ENCODE measurements at regions of chr3 and their contacts with region 1.

Region 1: GRCh38 chr3:13452490-13453335 is 27.4 kb upstream of the HDAC11 start:
- DNase-seq: peak in 1 of 2 experiments; percentile 61
- H3K4me3 ChIP-seq: peak overlapping the region; percentile 68
- H3K4me3 Mint-ChIP-seq: peak overlapping the region; percentile 78
- H3K27ac Mint-ChIP-seq: peak overlapping the region; percentile 92
- H3K4me1 ChIP-seq: no peaks in the 10 kb centered on the region
- H3K4me1 Mint-ChIP-seq: no peaks in the 10 kb centered on the region
- H3K27me3 ChIP-seq: no peaks in the 10 kb centered on the region
- H3K27me3 Mint-ChIP-seq: no peaks in the 10 kb centered on the region
- CTCF ChIP-seq: peak; percentile 60 to 63

Region 2: DNA sequence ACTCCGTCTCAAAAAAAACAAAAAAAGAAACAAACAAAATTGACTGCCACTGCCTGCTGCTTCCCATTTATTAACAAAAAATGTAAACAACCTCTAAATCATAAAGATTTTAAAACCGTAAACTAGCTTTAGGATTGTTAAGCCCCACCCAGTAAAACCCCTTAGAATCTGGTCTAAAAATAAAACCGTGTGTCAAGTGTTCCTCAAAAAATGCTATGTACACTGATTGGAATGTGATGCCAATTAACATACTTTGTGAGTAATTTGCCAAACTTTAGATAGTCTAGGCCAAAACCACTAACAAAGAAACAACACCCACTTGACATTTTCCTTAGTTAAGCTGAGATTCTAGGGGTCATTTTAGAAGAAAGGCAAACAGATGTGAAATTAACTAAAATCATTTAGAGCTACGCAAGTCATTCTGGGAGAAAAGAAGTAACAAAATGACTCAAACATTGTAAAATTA is 794.1 kb before region 1 on chr3:
- CTCF ChIA-PET with region 1: no interaction called
- POLR2A ChIA-PET with region 1: no interaction called
- intact Hi-C with region 1: no loop called
- DNase-seq: no peak
- H3K4me3 ChIP-seq: no peak overlapping the region
- H3K4me3 Mint-ChIP-seq: no peak overlapping the region
- H3K27ac Mint-ChIP-seq: peak overlapping the region; percentile 42
- H3K4me1 ChIP-seq: peaks cover 24% of the 10 kb centered on the region
- H3K4me1 Mint-ChIP-seq: peaks cover 33% of the 10 kb centered on the region
- H3K27me3 ChIP-seq: no peaks in the 10 kb centered on the region
- H3K27me3 Mint-ChIP-seq: no peaks in the 10 kb centered on the region
- CTCF ChIP-seq: no peak

Region 3: DNA sequence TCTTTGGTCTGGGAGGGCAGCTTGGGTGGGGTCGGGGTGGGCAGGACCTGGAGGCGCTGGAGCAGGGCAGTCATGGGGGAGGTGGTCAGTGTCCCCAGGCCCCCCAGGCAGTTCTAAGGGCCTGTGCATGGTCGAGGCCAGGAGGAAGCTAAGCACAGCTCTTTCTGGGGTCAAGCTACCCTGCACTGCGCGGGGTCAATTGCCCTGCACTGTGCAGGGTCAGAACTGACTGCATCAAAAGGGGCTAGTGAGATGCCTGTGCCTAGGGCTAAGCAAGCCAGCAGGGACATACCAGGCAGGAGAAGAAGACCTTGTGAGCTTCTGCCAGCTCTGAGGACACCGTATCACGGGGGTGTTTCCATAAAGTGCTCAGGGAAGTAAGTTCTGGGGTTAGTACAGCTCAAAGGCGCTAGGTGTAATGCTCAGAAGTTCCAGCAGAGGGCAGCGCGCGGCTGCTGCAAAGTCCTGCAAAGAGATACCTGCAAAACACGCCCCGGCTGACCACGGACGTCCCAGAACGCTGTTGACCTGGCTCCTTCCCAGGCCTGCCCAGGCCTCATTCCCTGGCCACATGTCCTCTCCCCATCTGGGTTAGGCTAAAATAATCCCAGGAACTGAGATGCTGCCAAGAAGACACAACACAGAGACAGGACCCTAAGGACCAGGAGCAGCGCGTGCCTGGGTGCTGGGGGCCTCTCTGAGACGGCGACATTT is 360.7 kb before region 1 on chr3:
- CTCF ChIA-PET with region 1: interaction called, 23 read pairs
- POLR2A ChIA-PET with region 1: no interaction called
- intact Hi-C with region 1: loop called (anchors 1 kb)
- DNase-seq: peak; percentile 80 to 83
- H3K4me3 ChIP-seq: no peak overlapping the region
- H3K4me3 Mint-ChIP-seq: no peak overlapping the region
- H3K27ac Mint-ChIP-seq: no peak overlapping the region
- H3K4me1 ChIP-seq: no peaks in the 10 kb centered on the region
- H3K4me1 Mint-ChIP-seq: no peaks in the 10 kb centered on the region
- H3K27me3 ChIP-seq: no peaks in the 10 kb centered on the region
- H3K27me3 Mint-ChIP-seq: no peaks in the 10 kb centered on the region
- CTCF ChIP-seq: peak; percentile 86 to 96

Region 4: GRCh38 chr3:13353936-13354542 is 98.7 kb before region 1 on chr3:
- CTCF ChIA-PET with region 1: interaction called, 14 read pairs
- POLR2A ChIA-PET with region 1: no interaction called
- intact Hi-C with region 1: loop called (anchors 5 kb)
- DNase-seq: peak in 1 of 2 experiments; percentile 24
- H3K4me3 ChIP-seq: no peak overlapping the region
- H3K4me3 Mint-ChIP-seq: no peak overlapping the region
- H3K27ac Mint-ChIP-seq: no peak overlapping the region
- H3K4me1 ChIP-seq: no peaks in the 10 kb centered on the region
- H3K4me1 Mint-ChIP-seq: no peaks in the 10 kb centered on the region
- H3K27me3 ChIP-seq: no peaks in the 10 kb centered on the region
- H3K27me3 Mint-ChIP-seq: no peaks in the 10 kb centered on the region
- CTCF ChIP-seq: peak in 1 of 2 experiments; percentile 47

Region 5: GRCh38 chr3:13406190-13406589 is 46.5 kb before region 1 on chr3:
- CTCF ChIA-PET with region 1: no interaction called
- POLR2A ChIA-PET with region 1: no interaction called
- intact Hi-C with region 1: no loop called
- DNase-seq: no peak
- H3K4me3 ChIP-seq: no peak overlapping the region
- H3K4me3 Mint-ChIP-seq: no peak overlapping the region
- H3K27ac Mint-ChIP-seq: no peak overlapping the region
- H3K4me1 ChIP-seq: no peaks in the 10 kb centered on the region
- H3K4me1 Mint-ChIP-seq: no peaks in the 10 kb centered on the region
- H3K27me3 ChIP-seq: no peaks in the 10 kb centered on the region
- H3K27me3 Mint-ChIP-seq: no peaks in the 10 kb centered on the region
- CTCF ChIP-seq: no peak

Region 6: DNA sequence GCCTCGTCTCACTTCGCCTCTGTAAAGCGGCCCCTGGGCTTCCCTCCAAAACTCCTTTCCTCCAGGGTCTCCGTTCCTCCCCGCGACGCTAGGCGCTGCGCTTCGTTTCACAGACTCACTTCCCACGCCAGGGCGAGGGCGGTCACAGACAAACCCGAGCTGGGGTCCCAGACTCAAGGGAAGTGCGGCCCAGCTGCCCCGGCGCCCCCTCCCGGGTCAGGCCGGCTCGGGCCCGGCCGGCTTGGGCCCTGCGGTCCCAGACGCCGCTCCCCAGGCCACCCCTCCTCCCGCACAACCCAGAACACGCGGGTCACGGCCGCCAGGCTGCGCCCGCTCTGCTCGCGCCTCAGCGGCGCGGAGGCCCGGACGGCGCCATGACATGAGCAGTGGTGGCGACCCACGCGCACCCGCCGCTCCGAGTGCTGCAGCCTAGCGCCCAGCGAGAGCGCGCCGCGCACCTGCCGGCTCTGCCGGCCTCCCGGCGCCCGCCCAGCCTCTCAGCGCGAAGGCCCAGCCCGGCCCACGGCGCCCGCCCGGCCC is 33.1 kb before region 1 on chr3:
- CTCF ChIA-PET with region 1: interaction called, 6 read pairs
- POLR2A ChIA-PET with region 1: interaction called, 6 read pairs
- intact Hi-C with region 1: loop called (anchors 1 kb)
- DNase-seq: peak in 1 of 2 experiments; percentile 63
- H3K4me3 ChIP-seq: peak overlapping the region; percentile 80
- H3K4me3 Mint-ChIP-seq: peak overlapping the region; percentile 82
- H3K27ac Mint-ChIP-seq: no peak overlapping the region
- H3K4me1 ChIP-seq: peaks cover 9% of the 10 kb centered on the region
- H3K4me1 Mint-ChIP-seq: peaks cover 8% of the 10 kb centered on the region
- H3K27me3 ChIP-seq: no peaks in the 10 kb centered on the region
- H3K27me3 Mint-ChIP-seq: no peaks in the 10 kb centered on the region
- CTCF ChIP-seq: peak in 1 of 2 experiments; percentile 7

Region 7: DNA sequence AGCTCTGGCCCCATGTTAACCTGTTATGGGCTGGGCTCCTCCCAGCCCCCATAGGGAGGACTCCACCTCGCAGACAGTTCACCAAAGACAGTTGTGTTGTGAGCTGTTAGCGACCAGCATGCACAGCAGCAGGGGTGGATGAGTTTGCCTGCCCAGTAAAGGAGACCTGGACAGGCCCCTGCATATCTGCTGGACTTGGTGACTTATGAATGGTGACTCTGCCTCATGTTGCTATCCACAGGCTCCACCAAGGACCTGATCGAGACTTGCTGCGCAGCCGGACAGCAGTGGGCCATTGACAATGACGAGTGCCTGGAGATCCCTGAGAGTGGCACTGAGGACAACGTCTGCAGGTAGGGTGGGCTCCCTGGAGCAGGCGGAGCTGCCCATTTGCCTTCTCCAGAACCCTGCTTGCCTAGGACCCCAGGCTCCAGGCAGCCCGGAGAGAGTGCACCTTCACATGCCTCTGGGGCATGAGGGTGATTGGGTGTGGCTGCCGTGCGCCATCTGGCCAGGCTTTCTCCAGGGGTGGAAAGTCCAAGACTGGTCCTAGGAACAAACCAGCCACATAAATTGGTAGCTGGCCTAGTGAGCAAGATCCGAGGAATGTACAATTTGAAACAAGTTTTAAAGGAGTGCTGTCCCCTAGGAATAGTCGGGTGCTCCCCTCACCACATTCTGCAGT is 155.2 kb after region 1 on chr3:
- CTCF ChIA-PET with region 1: no interaction called
- POLR2A ChIA-PET with region 1: interaction called, 15 read pairs
- intact Hi-C with region 1: no loop called
- DNase-seq: no peak
- H3K4me3 ChIP-seq: no peak overlapping the region
- H3K4me3 Mint-ChIP-seq: no peak overlapping the region
- H3K27ac Mint-ChIP-seq: no peak overlapping the region
- H3K4me1 ChIP-seq: no peaks in the 10 kb centered on the region
- H3K4me1 Mint-ChIP-seq: no peaks in the 10 kb centered on the region
- H3K27me3 ChIP-seq: no peaks in the 10 kb centered on the region
- H3K27me3 Mint-ChIP-seq: no peaks in the 10 kb centered on the region
- CTCF ChIP-seq: no peak

Measured in Caco-2 (cell line).